ENCODE measurements at regions of chr16 and their contacts with region 1.

Region 1: DNA sequence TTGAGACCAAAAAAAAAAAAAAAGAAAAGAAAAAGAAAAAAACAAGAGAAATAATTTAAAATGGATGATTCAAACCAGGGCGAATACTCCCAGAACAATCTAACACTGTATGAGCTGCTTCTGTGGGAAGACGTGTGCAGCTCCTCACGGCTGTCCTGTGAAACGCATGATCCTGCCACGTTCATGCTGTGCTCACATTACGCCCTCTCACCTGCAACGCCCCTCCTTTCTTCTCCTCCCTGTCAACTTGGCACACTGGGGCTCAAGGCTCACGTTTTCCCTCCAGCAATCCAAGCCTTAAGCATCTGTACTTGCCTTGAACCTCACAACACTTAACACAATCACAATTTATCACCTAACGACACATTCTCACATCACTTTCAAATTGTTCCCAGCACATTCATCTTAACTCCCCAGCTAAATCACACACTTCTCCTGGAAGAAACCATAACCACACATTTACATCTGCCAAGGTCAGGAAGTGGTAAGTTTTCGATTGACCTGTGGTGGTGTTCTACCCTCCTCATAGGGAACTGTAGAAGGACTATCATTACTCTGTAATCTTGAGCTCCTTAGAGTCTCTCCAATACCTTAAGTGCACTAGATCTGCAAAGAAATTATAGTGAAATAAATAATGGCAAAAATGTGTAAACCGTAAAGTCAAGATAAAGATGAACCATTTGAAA is 29.1 kb downstream of the MBTPS1 start:
- DNase-seq: no peak
- H3K4me3 ChIP-seq: no peak overlapping the region
- H3K27ac ChIP-seq: no peak overlapping the region
- H3K4me1 ChIP-seq: peaks cover 21% of the 10 kb centered on the region
- H3K27me3 ChIP-seq: no peaks in the 10 kb centered on the region
- CTCF ChIP-seq: no peak
- POLR2A ChIP-seq: no peak

Region 2: DNA sequence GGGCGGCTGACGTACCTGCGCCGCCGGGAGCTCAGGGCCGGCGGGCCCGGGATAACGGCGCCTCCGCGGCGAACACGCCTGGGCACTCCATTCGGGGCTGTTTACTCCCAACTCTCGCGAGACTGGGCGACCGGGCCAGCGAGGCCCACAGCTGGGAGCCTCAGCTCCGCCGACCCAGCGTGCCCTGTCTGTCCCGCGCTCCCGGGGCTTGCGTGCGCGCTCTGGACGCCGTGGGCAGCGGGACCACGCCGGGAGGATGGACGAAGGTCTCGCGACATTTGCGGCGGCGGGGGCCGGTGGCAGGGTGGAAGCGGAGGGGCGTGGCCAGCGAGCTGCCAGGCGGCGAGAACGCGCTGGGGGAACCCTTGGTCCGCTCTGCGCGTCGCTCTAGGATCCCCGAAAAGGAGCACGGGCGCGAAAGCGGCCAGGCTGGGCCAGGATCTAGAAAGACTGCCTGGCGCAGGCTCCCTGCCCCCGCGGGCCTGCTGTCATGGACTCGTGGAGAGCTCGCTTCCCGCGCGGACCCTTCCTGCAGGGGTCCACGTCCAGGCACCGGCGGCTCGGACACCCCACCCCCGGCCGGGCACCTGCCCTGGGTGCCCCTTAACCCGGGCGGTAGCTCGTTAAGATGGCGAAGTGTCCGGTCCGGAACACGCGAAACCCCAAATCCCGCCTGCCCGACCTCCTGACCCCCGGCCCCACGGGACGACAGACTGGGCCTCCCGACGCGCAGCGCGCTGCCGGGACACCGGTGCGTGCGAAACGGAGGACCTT is 29.3 kb after region 1 on chr16 and contains the start of gene MBTPS1:
- intact Hi-C with region 1: loop called (anchors 2 kb)
- DNase-seq: peak; percentile 98
- H3K4me3 ChIP-seq: peak within 1 kb of the TSS; percentile 97
- H3K27ac ChIP-seq: peak within 1 kb of the TSS; percentile 81 to 93
- H3K4me1 ChIP-seq: peaks cover 10% of the 10 kb centered on the region
- H3K27me3 ChIP-seq: no peaks in the 10 kb centered on the region
- CTCF ChIP-seq: peak in 2 of 3 experiments; percentile 8 to 35
- POLR2A ChIP-seq: no peak
- total RNA-seq, gene MBTPS1: 104 to 122 TPM

Measured in testis (tissue), 5 donors.